ENCODE measurements at regions of chr3 and their contacts with region 1.

Region 1: DNA sequence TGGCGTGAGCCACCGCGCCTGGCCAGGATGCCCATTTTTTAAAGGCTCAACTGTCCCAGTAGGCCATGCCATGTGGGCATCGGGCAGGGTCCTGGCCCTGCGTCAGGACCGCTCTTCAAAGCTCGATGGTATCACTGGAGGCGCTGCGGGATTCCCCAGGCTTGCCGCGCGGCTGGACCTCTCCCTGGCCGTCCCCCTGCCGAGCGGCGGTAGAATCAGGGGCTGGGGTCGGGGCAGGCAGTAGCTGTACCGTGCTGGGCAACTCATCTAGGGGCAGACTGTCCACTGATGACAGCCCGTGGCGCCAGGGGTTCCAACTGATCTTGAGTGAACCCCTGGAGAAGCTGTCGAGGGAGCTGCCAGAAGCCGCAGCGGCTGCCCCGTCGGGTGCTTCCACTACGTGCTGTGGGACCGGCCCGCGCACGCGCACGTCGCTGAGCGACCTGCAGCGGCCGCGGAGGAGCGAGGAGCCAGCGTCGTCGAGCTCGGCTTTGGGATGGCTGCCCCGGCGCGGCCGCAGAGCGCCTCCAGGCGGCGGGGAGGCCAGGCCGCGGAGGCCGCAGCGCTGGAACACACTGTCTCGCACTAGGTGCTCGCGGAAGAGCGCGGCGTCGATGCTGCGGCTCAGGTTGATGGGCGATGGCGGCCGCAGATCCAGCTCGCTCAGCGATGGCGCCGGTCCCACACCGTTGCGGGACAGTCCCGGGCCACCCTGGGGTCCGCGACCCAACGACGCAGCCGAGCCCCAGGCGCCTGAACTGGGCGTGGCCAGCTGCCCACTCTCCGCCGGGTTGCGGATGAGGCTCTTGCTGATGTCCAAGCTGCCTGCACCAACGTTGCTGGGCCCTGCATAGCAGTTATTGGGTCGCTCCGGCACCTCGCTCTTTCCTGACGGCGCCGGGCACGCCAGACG is 5.8 kb downstream of the PRRT3 start:
- DNase-seq: peak; percentile 94
- H3K4me3 ChIP-seq: peak overlapping the region; percentile 27 to 60 (median 34)
- H3K27ac ChIP-seq: no peak overlapping the region
- H3K4me1 ChIP-seq: peaks cover 3% of the 10 kb centered on the region
- H3K27me3 ChIP-seq: no peaks in the 10 kb centered on the region
- CTCF ChIP-seq: peak; percentile 83 to 85
- POLR2A ChIP-seq: peak; percentile 82

Region 2: DNA sequence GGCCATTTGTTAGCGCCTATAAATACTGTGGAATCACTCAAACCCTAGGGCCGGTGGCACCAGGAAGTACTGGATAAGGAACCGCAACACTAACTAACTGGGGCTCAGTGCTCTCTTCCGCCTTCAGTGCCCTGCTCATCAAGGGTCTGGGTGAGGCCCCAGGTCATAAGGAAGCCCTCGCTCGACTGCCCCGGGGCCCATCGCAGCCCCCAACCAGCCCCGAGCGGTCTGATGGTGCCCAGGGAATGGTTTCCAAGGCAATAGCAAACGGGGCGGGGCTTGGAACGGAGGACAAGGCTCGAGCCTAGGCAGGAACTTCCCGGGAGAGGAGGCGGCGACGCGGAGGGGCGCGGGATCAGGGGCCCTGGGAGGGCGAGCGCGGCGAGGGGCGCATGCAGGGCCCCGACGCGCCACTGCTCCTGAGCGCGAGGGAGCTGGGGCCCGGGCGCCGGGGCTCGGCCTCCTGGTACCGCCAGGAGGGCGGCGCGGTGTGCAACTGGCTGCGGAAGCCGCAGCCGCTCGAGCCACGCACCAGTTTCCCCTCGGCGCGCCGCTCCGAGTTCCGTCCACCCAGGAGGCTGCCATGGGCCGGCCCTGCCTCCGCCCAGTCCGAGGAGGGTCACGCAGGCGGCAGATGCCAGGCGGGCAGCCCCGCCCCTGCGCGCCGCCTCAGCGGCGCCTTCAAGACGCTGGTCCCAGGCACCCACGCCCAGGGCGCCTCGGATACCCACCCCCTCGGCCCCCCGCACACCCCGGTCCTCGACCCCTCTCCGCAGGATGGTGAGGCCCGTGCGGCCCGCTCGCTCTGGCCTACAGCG is 136.5 kb before region 1 on chr3 and contains the start of gene TTLL3:
- CTCF ChIA-PET with region 1: interaction called, 12 read pairs
- POLR2A ChIA-PET with region 1: no interaction called
- dilution Hi-C with region 1: no loop called
- intact Hi-C with region 1: loop called (anchors 1 kb)
- DNase-seq: peak; percentile 53
- H3K4me3 ChIP-seq: peak within 1 kb of the TSS; percentile 52 to 64 (median 55)
- H3K27ac ChIP-seq: peak within 1 kb of the TSS; percentile 36
- H3K4me1 ChIP-seq: peaks cover 12% of the 10 kb centered on the region
- H3K27me3 ChIP-seq: no peaks in the 10 kb centered on the region
- CTCF ChIP-seq: peak in 1 of 2 donors; percentile 5
- POLR2A ChIP-seq: peak; percentile 72
- total RNA-seq, gene TTLL3: 41.8 and 43.5 TPM in 2 replicates

Region 3: GRCh38 chr3:9890249-9891071 is 55.9 kb before region 1 on chr3 and contains the start of gene JAGN1:
- CTCF ChIA-PET with region 1: interaction called, 11 read pairs
- POLR2A ChIA-PET with region 1: no interaction called
- dilution Hi-C with region 1: no loop called
- intact Hi-C with region 1: loop called (anchors 2 kb)
- DNase-seq: peak; percentile 92
- H3K4me3 ChIP-seq: peak within 1 kb of the TSS; percentile 82 to 92 (median 89)
- H3K27ac ChIP-seq: peak within 1 kb of the TSS; percentile 76
- H3K4me1 ChIP-seq: peaks cover 25% of the 10 kb centered on the region
- H3K27me3 ChIP-seq: no peaks in the 10 kb centered on the region
- CTCF ChIP-seq: no peak
- POLR2A ChIP-seq: peak; percentile 95
- total RNA-seq, gene JAGN1: 29.6 and 31.4 TPM in 2 replicates

Region 4: GRCh38 chr3:9932843-9933560 is 13.4 kb before region 1 on chr3:
- CTCF ChIA-PET with region 1: interaction called, 105 read pairs
- POLR2A ChIA-PET with region 1: interaction called, 14 read pairs
- dilution Hi-C with region 1: no loop called
- intact Hi-C with region 1: loop called (anchors 1 kb)
- DNase-seq: peak; percentile 84
- H3K4me3 ChIP-seq: peak overlapping the region; percentile 19 to 76 (median 55)
- H3K27ac ChIP-seq: peak overlapping the region; percentile 85
- H3K4me1 ChIP-seq: peaks cover 16% of the 10 kb centered on the region
- H3K27me3 ChIP-seq: no peaks in the 10 kb centered on the region
- CTCF ChIP-seq: peak; percentile 75 to 91
- POLR2A ChIP-seq: no peak

Region 5: DNA sequence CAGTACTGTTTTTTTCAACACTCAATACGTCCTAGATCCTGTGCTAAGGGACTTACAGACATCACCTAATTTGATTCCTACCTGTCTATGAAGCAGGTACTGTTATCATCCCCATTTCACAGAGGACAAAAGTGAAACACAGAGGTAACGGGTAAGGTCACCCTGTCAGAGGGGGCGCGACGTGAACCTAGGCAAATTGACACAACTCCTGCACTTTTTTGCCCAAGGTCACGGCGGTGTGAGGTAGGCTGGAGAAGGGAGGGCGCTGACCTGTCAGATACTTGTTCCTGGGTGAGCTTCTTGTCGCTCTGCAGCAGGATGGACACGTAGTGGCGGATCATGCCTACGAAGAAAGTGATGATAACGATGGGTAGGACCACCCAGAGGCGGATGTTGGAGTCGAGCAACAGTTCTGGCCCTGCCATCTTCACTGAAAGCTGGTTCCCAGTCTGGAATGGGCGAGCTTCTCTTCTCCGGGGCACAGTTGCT is 39.9 kb after region 1 on chr3:
- CTCF ChIA-PET with region 1: interaction called, 9 read pairs
- POLR2A ChIA-PET with region 1: interaction called, 3 read pairs
- dilution Hi-C with region 1: no loop called
- intact Hi-C with region 1: loop called (anchors 2 kb)
- DNase-seq: no peak
- H3K4me3 ChIP-seq: peak overlapping the region; percentile 45 to 71 (median 65)
- H3K27ac ChIP-seq: peak overlapping the region; percentile 54
- H3K4me1 ChIP-seq: peaks cover 17% of the 10 kb centered on the region
- H3K27me3 ChIP-seq: no peaks in the 10 kb centered on the region
- CTCF ChIP-seq: no peak
- POLR2A ChIP-seq: no peak

Region 6: DNA sequence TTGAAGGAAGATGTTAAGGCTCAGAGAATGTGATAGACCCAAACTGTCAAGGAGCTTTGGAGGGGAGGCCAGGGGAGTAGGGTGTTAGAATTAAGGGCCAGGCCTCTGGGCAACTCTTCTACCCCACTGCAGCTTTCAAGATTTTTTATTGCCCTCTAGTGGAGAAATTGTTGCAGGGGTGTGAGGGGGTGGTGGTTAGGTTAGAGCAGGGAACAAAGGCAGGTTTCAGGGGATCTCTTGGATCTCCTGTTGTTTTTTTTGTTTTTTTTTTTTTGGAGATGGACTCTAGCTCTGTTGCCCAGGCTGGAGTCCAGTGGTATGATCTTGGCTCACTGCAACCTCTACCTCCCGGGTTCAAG is 376.0 kb after region 1 on chr3:
- CTCF ChIA-PET with region 1: interaction called, 8 read pairs
- POLR2A ChIA-PET with region 1: no interaction called
- dilution Hi-C with region 1: no loop called
- intact Hi-C with region 1: loop called (anchors 5 kb)
- DNase-seq: no peak
- H3K4me3 ChIP-seq: no peak overlapping the region
- H3K27ac ChIP-seq: no peak overlapping the region
- H3K4me1 ChIP-seq: peaks cover 25% of the 10 kb centered on the region
- H3K27me3 ChIP-seq: peaks cover 12 to 13% of the 10 kb centered on the region in 2 experiments
- CTCF ChIP-seq: peak; percentile 37 to 45
- POLR2A ChIP-seq: no peak

Measured in endothelial cell of umbilical vein (primary cell).